GM12878 (cell line): ENCODE measurements at regions of chr11 and their contacts with region 1.

Region 1: DNA sequence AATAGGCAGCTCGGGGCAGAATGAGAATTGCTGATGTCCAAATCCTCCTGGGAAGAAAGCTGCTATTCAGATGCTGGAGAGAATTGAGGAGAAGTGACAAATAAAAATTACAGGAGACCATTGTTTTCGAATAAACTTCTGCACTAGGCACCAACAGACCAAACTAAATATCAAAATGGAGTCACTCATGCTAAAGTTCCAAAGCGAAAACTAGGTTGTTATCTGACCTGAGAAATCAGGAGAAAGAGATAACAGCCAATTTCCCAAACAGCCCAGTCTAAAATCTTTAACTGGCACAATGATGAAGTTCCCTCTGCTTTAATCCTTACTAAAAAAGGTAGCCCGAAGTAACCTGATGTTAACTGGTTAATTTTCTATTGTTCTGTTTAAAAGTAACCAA is 112.8 kb upstream of the APOA1 start:
- DNase-seq: no peak
- ATAC-seq: no peak
- H3K4me3 ChIP-seq: no peak overlapping the region
- H3K27ac ChIP-seq: no peak overlapping the region
- H3K4me1 ChIP-seq: no peaks in the 10 kb centered on the region; the same call in 1 of the 2 replicates
- H3K27me3 ChIP-seq: no peaks in the 10 kb centered on the region
- CTCF ChIP-seq: no peak
- EP300 ChIP-seq: no peak
- POLR2A ChIP-seq: no peak
- RAD21 ChIP-seq: no peak

Region 2: GRCh38 chr11:116960930-116961329 is 10.7 kb after region 1 on chr11:
- CTCF ChIA-PET with region 1: no interaction called
- POLR2A ChIA-PET with region 1: interaction called, 3 read pairs
- RAD21 ChIA-PET with region 1: no interaction called
- SMC1A ChIA-PET with region 1: interaction called, 18 read pairs
- in situ Hi-C with region 1: no loop called
- intact Hi-C with region 1: no loop called
- DNase-seq: no peak
- ATAC-seq: 0 out of 3 replicates have a peak, but pooled peaks have one; percentile 21
- H3K4me3 ChIP-seq: no peak overlapping the region
- H3K27ac ChIP-seq: no peak overlapping the region
- H3K4me1 ChIP-seq: no peaks in the 10 kb centered on the region
- H3K27me3 ChIP-seq: no peaks in the 10 kb centered on the region
- CTCF ChIP-seq: no peak
- EP300 ChIP-seq: no peak
- POLR2A ChIP-seq: no peak
- RAD21 ChIP-seq: no peak